Posterior vena cava (tissue), 2 donors: ENCODE measurements at regions of chr4 and their contacts with region 1.

Region 1: DNA sequence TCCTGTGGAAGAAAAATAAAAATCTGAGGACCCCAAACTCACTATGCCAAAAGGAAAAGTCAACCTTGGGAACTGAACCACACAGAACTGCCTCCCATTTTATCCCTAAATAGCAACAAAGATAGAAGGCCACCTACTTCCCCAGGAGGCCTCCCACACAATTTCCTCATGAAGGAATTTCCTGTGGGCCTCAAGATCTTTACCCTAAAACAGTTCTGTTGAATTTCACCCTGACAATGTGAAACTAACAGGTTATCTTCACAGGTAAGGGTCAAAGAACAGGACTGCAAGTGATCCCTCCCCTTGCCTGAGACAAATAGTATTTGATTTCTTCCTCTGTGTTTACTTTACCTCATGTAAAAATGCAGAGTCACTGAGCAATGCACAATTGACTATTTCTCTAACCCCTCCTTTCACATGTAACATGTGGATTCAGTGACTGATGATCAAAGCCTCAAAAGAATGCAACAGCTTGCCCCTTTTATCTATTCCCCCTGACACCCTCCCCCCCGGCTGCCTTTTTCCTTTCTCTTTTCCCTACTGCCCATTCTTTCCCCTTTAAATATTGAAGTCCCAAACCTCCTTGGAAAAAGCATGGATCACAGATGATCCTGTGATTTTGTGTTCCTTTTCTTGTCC is 33.3 kb downstream of the MEPE start:
- DNase-seq: no peak

Region 2: GRCh38 chr4:87901422-87901992 is 35.4 kb after region 1 on chr4:
- intact Hi-C with region 1: no loop called
- DNase-seq: no peak

Region 3: DNA sequence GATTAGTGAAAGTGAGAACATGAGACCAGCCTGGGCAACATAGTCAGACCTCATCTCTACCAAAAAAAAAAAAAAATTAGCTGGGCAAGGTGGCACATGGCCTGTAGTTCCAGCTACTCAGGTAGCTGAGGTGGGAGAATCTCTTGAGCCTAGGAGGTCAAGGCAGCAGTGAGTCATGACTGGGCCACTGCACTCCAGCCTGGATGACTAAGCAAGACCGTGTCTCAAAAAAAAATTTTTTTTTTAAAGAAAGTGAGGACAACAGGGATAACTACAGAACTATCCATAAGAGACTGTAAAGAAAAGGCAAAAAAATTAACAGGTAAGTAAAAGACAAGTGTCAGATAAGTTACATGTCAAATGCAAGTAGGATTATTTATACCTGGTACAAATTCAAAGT is 95.9 kb after region 1 on chr4:
- intact Hi-C with region 1: loop called in 1 of 2 experiments (anchors 10 kb)
- DNase-seq: no peak

Region 4: GRCh38 chr4:88928852-88929251 is 1062.8 kb after region 1 on chr4:
- intact Hi-C with region 1: no loop called
- DNase-seq: no peak